CD4-positive, alpha-beta T cell (primary cell): ENCODE measurements at regions of chr3 and their contacts with region 1.

Region 1: DNA sequence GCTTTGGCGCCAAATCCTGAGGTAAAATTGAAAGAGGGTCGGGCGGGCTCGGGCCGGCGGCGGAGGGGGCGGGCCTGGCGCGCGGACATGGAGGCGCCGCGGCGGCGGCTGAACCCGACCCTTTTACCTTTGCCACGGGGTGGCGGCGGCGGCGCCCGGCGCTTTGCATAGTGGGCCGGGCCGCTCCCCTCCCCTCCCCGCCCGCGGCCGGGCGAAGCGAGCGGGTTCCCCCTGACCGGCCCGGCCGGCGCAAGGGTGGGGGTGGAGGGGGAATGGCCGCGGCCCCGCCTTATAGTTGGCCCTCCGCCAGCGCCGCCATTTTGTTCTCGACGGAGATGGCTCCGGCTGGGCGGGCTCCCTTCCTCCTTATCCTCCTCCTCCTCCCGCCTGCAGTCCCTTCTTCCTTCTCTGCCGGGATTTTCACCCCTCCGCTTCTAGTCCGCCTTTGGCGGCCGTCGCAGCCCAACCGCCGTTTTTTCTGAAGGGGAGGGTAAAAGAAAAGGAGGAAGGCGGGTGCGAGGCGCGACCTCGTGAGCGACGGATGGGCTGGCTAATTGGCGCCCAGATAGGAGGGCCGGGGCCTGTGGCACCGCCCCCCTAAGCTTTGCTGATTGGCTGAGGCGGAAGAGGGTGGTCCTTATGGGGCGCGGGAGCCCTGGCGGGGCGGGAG is 638 bp downstream of the NR2C2 start:
- DNase-seq: peak; percentile 93 to 97 (median 95)
- ATAC-seq: peak; percentile 90
- H3K4me3 ChIP-seq: peak overlapping the region; percentile 96
- H3K4me3 Mint-ChIP-seq: peak overlapping the region; percentile 98
- H3K27ac ChIP-seq: peak overlapping the region; percentile 98 to 99
- H3K27ac Mint-ChIP-seq: peak overlapping the region; percentile 98
- H3K4me1 ChIP-seq: peaks cover 30% of the 10 kb centered on the region
- H3K4me1 Mint-ChIP-seq: peaks cover 66% of the 10 kb centered on the region
- H3K27me3 ChIP-seq: no peaks in the 10 kb centered on the region
- H3K27me3 Mint-ChIP-seq: no peaks in the 10 kb centered on the region
- CTCF ChIP-seq: no peak

Region 2: GRCh38 chr3:14124615-14125190 is 823.3 kb before region 1 on chr3 and contains the starts of genes CHCHD4 and TMEM43:
- CTCF ChIA-PET with region 1: no interaction called
- POLR2A ChIA-PET with region 1: interaction called, 6 read pairs
- intact Hi-C with region 1: loop called in 1 of 2 experiments (anchors 5 kb)
- DNase-seq: peak; percentile 94 to 100 (median 98)
- ATAC-seq: peak; percentile 89
- H3K4me3 ChIP-seq: peak within 1 kb of the TSS; percentile 96
- H3K4me3 Mint-ChIP-seq: peak within 1 kb of the TSS; percentile 97
- H3K27ac ChIP-seq: peak within 1 kb of the TSS; percentile 76 to 86
- H3K27ac Mint-ChIP-seq: peak within 1 kb of the TSS; percentile 91
- H3K4me1 ChIP-seq: peaks cover 53% of the 10 kb centered on the region
- H3K4me1 Mint-ChIP-seq: peaks cover 73% of the 10 kb centered on the region
- H3K27me3 ChIP-seq: no peaks in the 10 kb centered on the region
- H3K27me3 Mint-ChIP-seq: no peaks in the 10 kb centered on the region
- CTCF ChIP-seq: no peak
- total RNA-seq, gene CHCHD4: 0.50 to 1.1 TPM
- total RNA-seq, gene TMEM43: 24.8 to 27.6 TPM

Region 3: DNA sequence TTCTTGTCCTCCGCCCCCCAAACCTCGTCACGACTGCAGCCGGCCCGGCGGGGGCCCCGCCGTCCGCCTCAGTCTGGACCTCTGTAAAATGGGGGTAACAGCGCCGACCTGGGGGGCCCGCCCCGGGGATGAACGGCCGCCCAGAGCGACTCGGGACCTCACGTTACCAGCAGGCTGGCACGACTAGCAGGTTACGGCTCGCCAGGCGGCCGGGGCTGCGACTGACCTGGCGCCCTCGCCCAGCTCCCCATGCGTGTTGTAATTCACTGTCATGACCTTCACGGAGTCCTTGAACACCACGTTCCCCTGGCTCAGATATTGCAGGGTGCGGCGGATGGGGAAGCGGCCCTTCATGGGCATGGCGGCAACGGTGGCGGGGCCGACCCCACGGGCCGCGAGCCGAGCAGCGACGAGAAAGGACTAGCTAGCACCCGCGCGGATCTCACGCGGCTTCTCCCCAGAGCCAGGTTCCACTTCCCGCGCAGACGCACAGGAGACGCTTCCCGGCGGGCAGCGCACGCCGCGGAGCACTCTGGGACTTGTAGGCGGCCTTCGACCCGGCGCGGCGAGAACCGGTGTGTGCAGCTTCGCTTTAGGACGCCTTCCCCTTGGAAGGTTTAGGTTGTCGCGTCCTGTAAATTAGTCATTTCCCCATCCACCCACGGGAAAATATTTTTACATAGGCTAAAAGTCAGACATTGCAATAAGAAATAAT is 117.0 kb after region 1 on chr3 and contains the start of gene MRPS25:
- CTCF ChIA-PET with region 1: interaction called, 3 read pairs
- POLR2A ChIA-PET with region 1: interaction called, 10 read pairs
- intact Hi-C with region 1: loop called in 1 of 2 experiments (anchors 1 kb)
- DNase-seq: peak; percentile 79 to 95 (median 85)
- ATAC-seq: peak; percentile 98
- H3K4me3 ChIP-seq: peak within 1 kb of the TSS; percentile 88
- H3K4me3 Mint-ChIP-seq: peak within 1 kb of the TSS; percentile 98
- H3K27ac ChIP-seq: peak within 1 kb of the TSS; percentile 61 to 77
- H3K27ac Mint-ChIP-seq: peak within 1 kb of the TSS; percentile 92
- H3K4me1 ChIP-seq: peaks cover 32% of the 10 kb centered on the region
- H3K4me1 Mint-ChIP-seq: peaks cover 25% of the 10 kb centered on the region
- H3K27me3 ChIP-seq: no peaks in the 10 kb centered on the region
- H3K27me3 Mint-ChIP-seq: no peaks in the 10 kb centered on the region
- CTCF ChIP-seq: no peak
- total RNA-seq, gene MRPS25: 59.9 to 60.2 TPM

Region 4: GRCh38 chr3:15098503-15099363 is 150.7 kb after region 1 on chr3 and contains the start of gene RBSN:
- CTCF ChIA-PET with region 1: no interaction called
- POLR2A ChIA-PET with region 1: interaction called, 23 read pairs
- intact Hi-C with region 1: loop called (anchors 2 to 10 kb)
- DNase-seq: peak; percentile 90 to 98 (median 94)
- ATAC-seq: peak; percentile 72
- H3K4me3 ChIP-seq: peak within 1 kb of the TSS; percentile 92
- H3K4me3 Mint-ChIP-seq: peak within 1 kb of the TSS; percentile 96
- H3K27ac ChIP-seq: peak within 1 kb of the TSS; percentile 96 to 98
- H3K27ac Mint-ChIP-seq: peak within 1 kb of the TSS; percentile 97
- H3K4me1 ChIP-seq: peaks cover 33% of the 10 kb centered on the region
- H3K4me1 Mint-ChIP-seq: peaks cover 36% of the 10 kb centered on the region
- H3K27me3 ChIP-seq: no peaks in the 10 kb centered on the region
- H3K27me3 Mint-ChIP-seq: peaks cover 5% of the 10 kb centered on the region
- CTCF ChIP-seq: no peak
- total RNA-seq, gene RBSN: 57.2 to 57.9 TPM

Region 5: DNA sequence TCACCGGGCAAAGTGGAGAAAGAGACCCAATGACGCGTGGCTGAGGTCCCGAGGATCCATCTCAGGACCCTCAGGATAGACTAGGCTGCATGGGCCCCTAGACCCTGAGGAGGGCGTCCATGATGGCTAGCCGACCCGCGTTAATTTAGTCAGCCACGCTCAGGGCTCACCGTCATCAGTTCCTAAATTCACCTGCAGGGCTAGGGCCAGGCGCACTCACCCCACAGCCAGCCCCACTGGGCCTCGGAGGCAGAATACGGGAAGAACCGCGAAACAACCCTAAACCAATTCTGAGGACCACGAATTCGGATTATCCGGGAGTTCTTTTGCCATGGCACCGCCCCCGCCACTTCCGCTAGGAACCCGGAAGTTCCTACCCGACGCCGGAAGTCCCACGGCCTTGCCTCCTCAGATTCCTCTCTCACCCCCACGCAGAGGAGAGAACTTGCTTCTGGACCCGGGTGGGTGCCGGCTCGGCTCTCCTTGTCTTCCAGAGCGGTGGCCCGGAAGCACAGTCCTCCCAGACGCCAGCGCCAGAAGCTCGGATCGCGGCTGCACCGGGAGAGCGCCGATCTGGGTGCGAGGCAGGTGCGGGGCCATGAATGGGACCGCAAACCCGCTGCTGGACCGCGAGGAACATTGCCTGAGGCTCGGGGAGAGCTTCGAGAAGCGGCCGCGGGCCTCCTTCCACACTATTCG is 479.3 kb after region 1 on chr3 and contains the starts of genes EAF1 and METTL6:
- CTCF ChIA-PET with region 1: no interaction called
- POLR2A ChIA-PET with region 1: no interaction called
- intact Hi-C with region 1: loop called in 1 of 2 experiments (anchors 10 kb)
- DNase-seq: peak; percentile 71 to 91 (median 80)
- ATAC-seq: peak; percentile 84
- H3K4me3 ChIP-seq: peak within 1 kb of the TSS; percentile 72
- H3K4me3 Mint-ChIP-seq: peak within 1 kb of the TSS; percentile 93
- H3K27ac ChIP-seq: peak within 1 kb of the TSS; percentile 58 to 80
- H3K27ac Mint-ChIP-seq: peak within 1 kb of the TSS; percentile 81
- H3K4me1 ChIP-seq: peaks cover 33% of the 10 kb centered on the region
- H3K4me1 Mint-ChIP-seq: peaks cover 74% of the 10 kb centered on the region
- H3K27me3 ChIP-seq: no peaks in the 10 kb centered on the region
- H3K27me3 Mint-ChIP-seq: no peaks in the 10 kb centered on the region
- CTCF ChIP-seq: peak; percentile 19
- total RNA-seq, gene EAF1: 31.7 to 34.9 TPM
- total RNA-seq, gene METTL6: 4.7 to 5.7 TPM

Region 6: GRCh38 chr3:15859507-15860013 is 911.5 kb after region 1 on chr3:
- CTCF ChIA-PET with region 1: no interaction called
- POLR2A ChIA-PET with region 1: no interaction called
- intact Hi-C with region 1: loop called in 1 of 2 experiments (anchors 5 kb)
- DNase-seq: peak; percentile 45 to 89 (median 63)
- ATAC-seq: peak; percentile 77
- H3K4me3 ChIP-seq: peak overlapping the region; percentile 74
- H3K4me3 Mint-ChIP-seq: peak overlapping the region; percentile 100
- H3K27ac ChIP-seq: no peak overlapping the region
- H3K27ac Mint-ChIP-seq: peak overlapping the region; percentile 93
- H3K4me1 ChIP-seq: peaks cover 15% of the 10 kb centered on the region
- H3K4me1 Mint-ChIP-seq: peaks cover 41% of the 10 kb centered on the region
- H3K27me3 ChIP-seq: no peaks in the 10 kb centered on the region
- H3K27me3 Mint-ChIP-seq: no peaks in the 10 kb centered on the region
- CTCF ChIP-seq: no peak